ENCODE measurements at regions of chr13 and their contacts with region 1.

Region 1: DNA sequence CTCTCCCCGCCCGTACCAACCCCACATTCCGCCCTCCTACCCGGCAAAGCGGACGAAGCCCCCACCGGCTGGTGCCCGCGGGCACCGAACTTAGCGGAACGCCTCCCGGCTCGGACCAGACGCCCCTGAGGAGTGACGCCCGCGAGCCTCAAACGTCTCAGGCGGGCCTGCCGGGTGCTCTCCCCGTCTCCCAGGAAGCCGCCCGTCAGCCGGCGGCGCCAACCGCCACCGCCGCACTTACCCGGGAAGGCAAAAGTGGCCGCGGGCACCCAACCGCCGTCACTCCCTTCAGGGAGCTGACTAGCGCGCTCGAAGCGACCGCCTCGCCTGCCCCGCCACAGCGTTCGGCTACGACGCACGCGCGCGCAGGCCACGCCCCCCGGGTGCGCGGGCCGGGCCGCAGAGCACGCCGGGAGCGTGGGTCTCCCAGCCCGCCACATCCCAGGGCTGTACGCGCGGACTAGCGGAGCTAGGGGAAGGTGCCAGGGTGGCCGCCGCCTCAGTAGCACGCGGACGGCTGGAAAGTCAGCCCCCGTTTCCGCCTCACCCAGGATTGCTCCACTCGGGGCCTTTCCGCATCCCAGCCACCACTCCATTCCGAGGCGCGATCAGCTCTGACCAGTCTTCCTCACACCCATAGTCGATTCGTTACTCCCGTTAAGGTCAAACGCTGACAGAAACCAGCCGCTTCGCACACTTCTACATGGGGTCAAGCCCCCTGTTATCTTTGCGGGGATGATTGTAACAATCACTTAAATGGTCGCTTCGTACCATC is at the start of gene TEX30:
- DNase-seq: peak; percentile 92
- ATAC-seq: peak; percentile 95
- H3K4me3 ChIP-seq: peak within 1 kb of the TSS; percentile 61 to 96 (median 87)
- H3K4me3 Mint-ChIP-seq: peak within 1 kb of the TSS; percentile 93
- H3K27ac ChIP-seq: peak within 1 kb of the TSS; percentile 71 to 85
- H3K27ac Mint-ChIP-seq: peak within 1 kb of the TSS; percentile 95
- H3K4me1 ChIP-seq: peaks cover 7 to 16% of the 10 kb centered on the region in 2 donors
- H3K4me1 Mint-ChIP-seq: peaks cover 13% of the 10 kb centered on the region
- H3K27me3 ChIP-seq: no peaks in the 10 kb centered on the region
- H3K27me3 Mint-ChIP-seq: no peaks in the 10 kb centered on the region
- CTCF ChIP-seq: no peak
- total RNA-seq, gene TEX30: 5.3 and 5.9 TPM in 2 replicates

Region 2: GRCh38 chr13:101325423-101325822 is 1448.2 kb before region 1 on chr13:
- CTCF ChIA-PET with region 1: no interaction called
- POLR2A ChIA-PET with region 1: no interaction called
- intact Hi-C with region 1: no loop called
- DNase-seq: no peak
- ATAC-seq: no peak
- H3K4me3 ChIP-seq: no peak overlapping the region
- H3K4me3 Mint-ChIP-seq: no peak overlapping the region
- H3K27ac ChIP-seq: no peak overlapping the region
- H3K27ac Mint-ChIP-seq: no peak overlapping the region
- H3K4me1 ChIP-seq: no peaks in the 10 kb centered on the region
- H3K4me1 Mint-ChIP-seq: no peaks in the 10 kb centered on the region
- H3K27me3 ChIP-seq: no peaks in the 10 kb centered on the region
- H3K27me3 Mint-ChIP-seq: no peaks in the 10 kb centered on the region
- CTCF ChIP-seq: no peak

Region 3: DNA sequence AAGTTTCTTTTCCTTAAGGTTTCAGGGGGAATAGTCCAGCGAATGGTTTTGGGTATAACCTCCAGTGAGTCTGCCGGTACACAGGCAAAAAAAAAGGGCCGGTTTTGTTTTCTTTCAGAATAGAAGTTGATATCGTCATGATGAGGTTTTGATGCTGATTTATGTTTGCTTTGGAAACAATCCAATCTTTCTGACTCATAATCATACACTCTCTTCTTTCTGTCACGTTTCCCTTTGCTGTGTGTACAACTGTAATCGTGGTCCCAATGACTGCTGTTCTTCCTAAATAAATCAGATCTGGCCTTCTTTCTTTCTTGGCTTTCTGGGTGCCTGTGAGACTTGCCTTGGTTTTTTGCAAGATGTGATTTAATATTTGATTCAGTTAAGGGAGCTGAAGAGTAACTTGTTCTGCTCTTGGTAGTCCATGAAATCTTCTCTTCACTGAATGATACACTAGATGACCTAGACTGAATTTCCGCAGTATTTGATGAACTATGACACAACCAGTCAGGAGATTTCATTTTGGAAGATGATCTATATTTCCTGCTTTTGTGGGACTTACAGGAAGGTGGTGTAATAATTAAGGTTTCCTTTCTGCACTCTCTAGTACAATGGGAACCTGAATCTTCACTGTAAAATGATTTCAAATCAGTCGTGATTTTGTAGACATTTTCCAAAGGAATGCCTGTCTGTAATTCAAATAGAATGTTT is 43.9 kb before region 1 on chr13:
- CTCF ChIA-PET with region 1: no interaction called
- POLR2A ChIA-PET with region 1: no interaction called
- intact Hi-C with region 1: no loop called
- DNase-seq: no peak
- ATAC-seq: no peak
- H3K4me3 ChIP-seq: no peak overlapping the region
- H3K4me3 Mint-ChIP-seq: no peak overlapping the region
- H3K27ac ChIP-seq: no peak overlapping the region
- H3K27ac Mint-ChIP-seq: no peak overlapping the region
- H3K4me1 ChIP-seq: no peaks in the 10 kb centered on the region
- H3K4me1 Mint-ChIP-seq: no peaks in the 10 kb centered on the region
- H3K27me3 ChIP-seq: no peaks in the 10 kb centered on the region
- H3K27me3 Mint-ChIP-seq: peaks cover 9% of the 10 kb centered on the region
- CTCF ChIP-seq: no peak

Region 4: GRCh38 chr13:102800145-102801041 is 26.8 kb after region 1 on chr13:
- CTCF ChIA-PET with region 1: interaction called, 12 read pairs
- POLR2A ChIA-PET with region 1: interaction called, 7 read pairs
- intact Hi-C with region 1: loop called (anchors 1 kb)
- DNase-seq: peak; percentile 84
- ATAC-seq: peak; percentile 90
- H3K4me3 ChIP-seq: peak overlapping the region; percentile 45 to 68 (median 53)
- H3K4me3 Mint-ChIP-seq: peak overlapping the region; percentile 84
- H3K27ac ChIP-seq: peak overlapping the region in 1 of 2 donors; percentile 49
- H3K27ac Mint-ChIP-seq: peak overlapping the region; percentile 32
- H3K4me1 ChIP-seq: peaks cover 24% of the 10 kb centered on the region in 2 donors
- H3K4me1 Mint-ChIP-seq: peaks cover 28% of the 10 kb centered on the region
- H3K27me3 ChIP-seq: peaks cover 0 to 18% (median 11%) of the 10 kb centered on the region in 4 experiments
- H3K27me3 Mint-ChIP-seq: peaks cover 8% of the 10 kb centered on the region
- CTCF ChIP-seq: peak; percentile 66

Region 5: DNA sequence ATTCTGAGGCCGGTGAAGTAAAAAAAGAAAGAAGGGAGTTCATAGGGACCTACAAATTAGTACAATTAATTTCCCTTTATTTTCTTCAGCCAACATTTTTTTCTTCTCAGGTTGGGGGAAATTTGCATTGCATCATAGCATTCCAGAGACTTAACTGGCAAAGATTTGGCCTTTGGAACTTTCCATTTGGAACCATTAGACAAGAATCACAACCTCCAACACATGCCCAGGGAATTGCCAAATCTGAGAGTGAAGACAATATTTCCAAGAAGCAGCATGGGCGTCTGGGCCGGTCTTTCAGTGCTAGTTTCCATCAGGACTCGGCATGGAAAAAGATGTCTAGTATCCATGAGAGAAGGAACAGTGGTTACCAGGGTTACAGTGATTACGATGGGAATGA is 65.8 kb after region 1 on chr13:
- CTCF ChIA-PET with region 1: no interaction called
- POLR2A ChIA-PET with region 1: no interaction called
- intact Hi-C with region 1: no loop called
- DNase-seq: no peak
- ATAC-seq: no peak
- H3K4me3 ChIP-seq: no peak overlapping the region
- H3K4me3 Mint-ChIP-seq: no peak overlapping the region
- H3K27ac ChIP-seq: no peak overlapping the region
- H3K27ac Mint-ChIP-seq: no peak overlapping the region
- H3K4me1 ChIP-seq: peaks cover 0 to 1% of the 10 kb centered on the region in 2 donors
- H3K4me1 Mint-ChIP-seq: peaks cover 3% of the 10 kb centered on the region
- H3K27me3 ChIP-seq: no peaks in the 10 kb centered on the region
- H3K27me3 Mint-ChIP-seq: no peaks in the 10 kb centered on the region
- CTCF ChIP-seq: no peak

Region 6: DNA sequence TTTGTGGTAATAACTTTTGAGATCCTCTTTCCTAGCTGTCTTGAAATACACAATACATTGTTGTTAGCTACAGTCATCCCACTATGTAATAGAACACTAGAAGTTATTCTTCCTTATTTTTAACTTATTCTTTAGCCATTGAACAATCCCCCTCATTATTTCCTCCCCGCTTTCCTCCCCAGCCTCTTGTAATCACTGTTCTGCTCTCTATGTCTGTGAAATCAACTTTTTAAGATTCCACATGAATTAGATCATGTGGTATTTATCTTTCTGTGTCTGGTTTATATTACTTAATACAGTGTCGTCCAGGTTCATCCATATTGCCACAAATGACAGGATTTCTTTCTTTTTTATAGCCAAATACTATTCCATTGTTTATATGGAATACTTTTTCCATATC is 219.7 kb after region 1 on chr13:
- CTCF ChIA-PET with region 1: no interaction called
- POLR2A ChIA-PET with region 1: no interaction called
- intact Hi-C with region 1: no loop called
- DNase-seq: no peak
- ATAC-seq: no peak
- H3K4me3 ChIP-seq: no peak overlapping the region
- H3K4me3 Mint-ChIP-seq: no peak overlapping the region
- H3K27ac ChIP-seq: no peak overlapping the region
- H3K27ac Mint-ChIP-seq: no peak overlapping the region
- H3K4me1 ChIP-seq: no peaks in the 10 kb centered on the region
- H3K4me1 Mint-ChIP-seq: no peaks in the 10 kb centered on the region
- H3K27me3 ChIP-seq: no peaks in the 10 kb centered on the region
- H3K27me3 Mint-ChIP-seq: no peaks in the 10 kb centered on the region
- CTCF ChIP-seq: no peak